ENCODE measurements at regions of chr14 and their contacts with region 1.

Region 1: DNA sequence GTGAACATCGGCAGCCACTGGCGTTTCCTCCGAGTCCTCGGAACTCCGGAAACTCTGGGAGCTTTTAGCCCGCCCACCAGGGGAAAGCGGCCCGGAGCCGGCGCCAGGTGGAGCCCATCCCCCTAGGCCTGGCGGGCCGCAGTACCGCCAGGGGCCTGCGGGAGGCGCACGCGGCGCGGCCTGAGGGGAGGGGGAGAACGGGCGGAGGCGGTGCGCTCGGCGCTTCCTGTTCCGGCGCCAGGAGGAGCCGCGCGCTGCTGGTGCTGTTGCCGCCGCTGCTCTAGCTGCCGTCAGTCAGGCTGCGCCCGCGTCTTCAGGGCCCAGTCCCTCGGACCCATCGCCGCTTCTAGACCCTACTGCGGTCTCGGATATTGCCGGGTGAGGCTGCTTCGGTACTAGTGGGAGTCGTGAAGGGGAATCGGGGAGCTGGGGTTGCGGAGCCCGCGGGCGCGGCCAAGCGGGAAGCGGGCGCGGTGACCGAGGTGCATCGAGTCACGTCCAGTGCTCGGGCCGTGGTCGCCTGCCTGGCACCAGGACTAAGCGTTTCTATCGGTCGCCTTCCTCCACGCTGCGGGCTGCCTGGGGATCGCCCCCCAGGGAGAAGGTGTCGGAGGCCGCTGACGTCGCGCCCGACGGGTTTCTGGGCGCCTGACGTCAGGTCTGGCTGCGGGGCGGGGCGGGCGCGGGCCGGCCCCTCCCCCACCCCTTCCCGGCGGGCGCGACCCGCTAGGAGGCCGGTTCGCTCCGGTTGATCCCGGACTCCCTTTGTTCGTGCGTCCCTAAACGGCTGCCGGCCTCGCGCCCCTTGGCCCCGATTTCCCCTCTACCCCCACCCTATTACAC is at the start of gene MAPK1IP1L:
- H3K4me3 ChIP-seq: peak within 1 kb of the TSS; percentile 100
- H3K27ac ChIP-seq: peak within 1 kb of the TSS; percentile 97
- H3K4me1 ChIP-seq: peaks cover 3% of the 10 kb centered on the region; the same call in 1 of the 2 replicates
- CTCF ChIP-seq: peak; percentile 97

Region 2: DNA sequence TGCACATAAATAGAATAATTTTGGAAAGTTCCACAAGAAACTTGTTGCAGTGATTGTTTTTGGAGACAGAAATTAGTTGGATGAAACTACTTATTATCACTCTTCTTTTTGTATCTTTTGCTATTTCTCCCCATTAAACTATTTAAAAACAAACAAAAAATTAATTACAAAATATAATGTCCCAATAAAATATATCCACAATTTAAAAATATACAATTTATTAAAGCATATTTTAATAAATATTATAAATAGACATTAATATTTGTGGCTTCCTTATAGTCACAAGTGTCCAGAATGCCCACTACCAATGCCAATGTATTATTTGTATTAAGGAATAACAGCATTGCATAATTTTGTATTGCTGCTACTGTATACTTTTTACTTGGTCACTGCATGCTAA is 96.5 kb before region 1 on chr14:
- CTCF ChIA-PET with region 1: no interaction called
- POLR2A ChIA-PET with region 1: no interaction called
- H3K4me3 ChIP-seq: no peak overlapping the region
- H3K27ac ChIP-seq: no peak overlapping the region
- H3K4me1 ChIP-seq: no peaks in the 10 kb centered on the region
- CTCF ChIP-seq: no peak

Region 3: GRCh38 chr14:55026793-55027561 is 24.7 kb before region 1 on chr14 and contains the starts of genes SOCS4 and WDHD1:
- CTCF ChIA-PET with region 1: interaction called, 11 read pairs
- POLR2A ChIA-PET with region 1: interaction called, 47 read pairs
- H3K4me3 ChIP-seq: peak within 1 kb of the TSS; percentile 99
- H3K27ac ChIP-seq: peak within 1 kb of the TSS; percentile 89
- H3K4me1 ChIP-seq: peaks cover 25% of the 10 kb centered on the region
- CTCF ChIP-seq: peak; percentile 85

Region 4: GRCh38 chr14:55038708-55039107 is 12.9 kb before region 1 on chr14:
- CTCF ChIA-PET with region 1: interaction called, 11 read pairs
- POLR2A ChIA-PET with region 1: interaction called, 4 read pairs
- H3K4me3 ChIP-seq: no peak overlapping the region
- H3K27ac ChIP-seq: no peak overlapping the region
- H3K4me1 ChIP-seq: no peaks in the 10 kb centered on the region
- CTCF ChIP-seq: no peak

Region 5: DNA sequence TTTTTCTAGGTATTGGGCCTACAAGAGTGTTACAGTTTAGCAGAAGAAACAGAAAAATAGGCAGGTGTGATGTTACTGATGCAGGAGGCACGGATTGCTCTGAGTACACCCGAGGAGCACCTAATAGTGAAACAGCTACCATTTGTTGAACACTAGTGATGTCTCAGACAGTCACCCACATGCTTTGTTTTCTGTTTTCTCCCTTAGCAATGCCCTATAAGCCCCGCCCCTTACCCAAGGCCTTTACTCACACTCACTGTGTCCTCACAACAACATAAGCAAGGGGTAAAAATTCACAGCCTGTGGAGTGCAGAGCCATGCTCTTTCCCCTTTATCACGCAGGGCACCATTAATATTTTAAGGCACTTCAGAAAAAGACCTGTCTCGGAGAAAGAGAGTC is 25.5 kb after region 1 on chr14:
- CTCF ChIA-PET with region 1: interaction called, 5 read pairs
- POLR2A ChIA-PET with region 1: interaction called, 11 read pairs
- H3K4me3 ChIP-seq: no peak overlapping the region
- H3K27ac ChIP-seq: no peak overlapping the region
- H3K4me1 ChIP-seq: no peaks in the 10 kb centered on the region
- CTCF ChIP-seq: no peak

Region 6: GRCh38 chr14:55645145-55645544 is 593.5 kb after region 1 on chr14:
- CTCF ChIA-PET with region 1: no interaction called
- POLR2A ChIA-PET with region 1: no interaction called
- H3K4me3 ChIP-seq: no peak overlapping the region
- H3K27ac ChIP-seq: no peak overlapping the region
- H3K4me1 ChIP-seq: no peaks in the 10 kb centered on the region
- CTCF ChIP-seq: no peak